HepG2 (cell line): ENCODE measurements at regions of chr1 and their contacts with region 1.

Region 1: GRCh38 chr1:222546548-222547259 is 1.2 kb downstream of the HHIPL2 start:
- DNase-seq: peak; percentile 29
- ATAC-seq: peak; percentile 74
- H3K4me3 ChIP-seq: peak overlapping the region; percentile 25 to 65 (median 31); a peak in 3 of 6 replicates
- H3K27ac ChIP-seq: no peak overlapping the region
- H3K4me1 ChIP-seq: peaks cover 28% of the 10 kb centered on the region
- H3K27me3 ChIP-seq: no peaks in the 10 kb centered on the region
- CTCF ChIP-seq: no peak
- EP300 ChIP-seq: no peak
- POLR2A ChIP-seq: no peak
- RAD21 ChIP-seq: no peak

Region 2: GRCh38 chr1:222617367-222617951 is 70.8 kb after region 1 on chr1:
- CTCF ChIA-PET with region 1: no interaction called
- POLR2A ChIA-PET with region 1: no interaction called
- in situ Hi-C with region 1: no loop called
- intact Hi-C with region 1: loop called (anchors 5 kb)
- DNase-seq: peak; percentile 77
- ATAC-seq: peak; percentile 89
- H3K4me3 ChIP-seq: peak overlapping the region; percentile 33 to 74 (median 57); a peak in 5 of 6 replicates
- H3K27ac ChIP-seq: no peak overlapping the region
- H3K4me1 ChIP-seq: peaks cover 38% of the 10 kb centered on the region
- H3K27me3 ChIP-seq: no peaks in the 10 kb centered on the region; a peak in 1 of 5 replicates
- CTCF ChIP-seq: no peak
- EP300 ChIP-seq: no peak
- POLR2A ChIP-seq: peak; percentile 53 to 61; a peak in 3 of 4 replicates
- RAD21 ChIP-seq: no peak

Region 3: GRCh38 chr1:222634180-222635013 is 87.7 kb after region 1 on chr1:
- CTCF ChIA-PET with region 1: interaction called, 5 read pairs
- POLR2A ChIA-PET with region 1: no interaction called
- in situ Hi-C with region 1: no loop called
- intact Hi-C with region 1: loop called (anchors 1 kb)
- DNase-seq: peak; percentile 87
- ATAC-seq: peak; percentile 84
- H3K4me3 ChIP-seq: no peak overlapping the region
- H3K27ac ChIP-seq: no peak overlapping the region
- H3K4me1 ChIP-seq: no peaks in the 10 kb centered on the region
- H3K27me3 ChIP-seq: no peaks in the 10 kb centered on the region
- CTCF ChIP-seq: peak; percentile 77
- EP300 ChIP-seq: no peak
- POLR2A ChIP-seq: no peak
- RAD21 ChIP-seq: peak; percentile 61; the same call in 1 of the 2 replicates

Region 4: DNA sequence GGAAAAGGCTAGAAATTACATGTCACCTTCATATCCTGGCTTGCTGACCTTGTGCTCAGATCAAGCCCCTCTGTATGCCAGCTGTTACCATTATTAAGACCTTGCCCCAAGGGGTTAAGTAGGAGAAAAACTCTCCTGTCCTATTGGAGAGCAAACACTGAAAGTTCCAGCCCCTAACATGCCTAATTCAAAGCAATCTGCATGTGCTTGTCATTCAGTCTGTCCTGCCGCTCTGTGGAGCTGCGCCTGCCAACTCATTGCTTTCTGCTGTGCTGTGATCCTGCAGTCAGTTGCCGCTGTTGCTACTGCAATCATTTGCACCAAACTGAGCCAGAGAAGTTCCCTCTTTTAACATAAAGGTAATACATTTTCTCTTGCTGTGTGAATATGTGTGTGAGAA is 381.5 kb after region 1 on chr1:
- CTCF ChIA-PET with region 1: no interaction called
- POLR2A ChIA-PET with region 1: no interaction called
- in situ Hi-C with region 1: no loop called
- intact Hi-C with region 1: no loop called
- DNase-seq: peak; percentile 49
- ATAC-seq: peak; percentile 98
- H3K4me3 ChIP-seq: peak overlapping the region in 1 of 3 experiments; percentile 40; a peak in 1 of 6 replicates
- H3K27ac ChIP-seq: peak overlapping the region; percentile 21
- H3K4me1 ChIP-seq: peaks cover 21% of the 10 kb centered on the region
- H3K27me3 ChIP-seq: no peaks in the 10 kb centered on the region
- CTCF ChIP-seq: no peak
- EP300 ChIP-seq: no peak
- POLR2A ChIP-seq: no peak
- RAD21 ChIP-seq: no peak